Adrenal gland (tissue), 19 donors: ENCODE measurements at regions of chr10 and their contacts with region 1.

Region 1: DNA sequence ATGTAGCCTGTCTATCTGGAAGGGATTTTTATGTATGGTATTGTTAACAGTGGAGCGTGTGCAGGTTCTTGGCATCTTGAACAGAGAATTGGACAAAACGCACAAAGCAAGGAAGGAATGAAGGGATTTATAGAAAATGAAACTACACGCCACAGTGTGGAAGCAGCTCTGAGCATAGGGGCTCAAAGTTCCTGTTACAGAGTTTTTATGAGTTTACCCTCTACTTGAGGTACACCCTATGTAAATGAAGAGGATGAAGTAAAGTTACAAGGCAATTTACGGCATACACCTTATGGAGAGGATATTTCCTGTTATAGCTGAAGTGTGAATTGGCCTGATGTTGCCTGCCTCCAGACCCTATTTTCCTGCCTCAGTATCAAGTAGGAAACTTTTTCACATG is 33.3 kb downstream of the FANK1 start:
- DNase-seq: no peak
- H3K4me3 ChIP-seq: no peak overlapping the region
- H3K27ac ChIP-seq: no peak overlapping the region
- H3K4me1 ChIP-seq: peaks cover 0 to 6% of the 10 kb centered on the region in 2 donors
- H3K27me3 ChIP-seq: no peaks in the 10 kb centered on the region
- CTCF ChIP-seq: no peak
- POLR2A ChIP-seq: no peak

Region 2: DNA sequence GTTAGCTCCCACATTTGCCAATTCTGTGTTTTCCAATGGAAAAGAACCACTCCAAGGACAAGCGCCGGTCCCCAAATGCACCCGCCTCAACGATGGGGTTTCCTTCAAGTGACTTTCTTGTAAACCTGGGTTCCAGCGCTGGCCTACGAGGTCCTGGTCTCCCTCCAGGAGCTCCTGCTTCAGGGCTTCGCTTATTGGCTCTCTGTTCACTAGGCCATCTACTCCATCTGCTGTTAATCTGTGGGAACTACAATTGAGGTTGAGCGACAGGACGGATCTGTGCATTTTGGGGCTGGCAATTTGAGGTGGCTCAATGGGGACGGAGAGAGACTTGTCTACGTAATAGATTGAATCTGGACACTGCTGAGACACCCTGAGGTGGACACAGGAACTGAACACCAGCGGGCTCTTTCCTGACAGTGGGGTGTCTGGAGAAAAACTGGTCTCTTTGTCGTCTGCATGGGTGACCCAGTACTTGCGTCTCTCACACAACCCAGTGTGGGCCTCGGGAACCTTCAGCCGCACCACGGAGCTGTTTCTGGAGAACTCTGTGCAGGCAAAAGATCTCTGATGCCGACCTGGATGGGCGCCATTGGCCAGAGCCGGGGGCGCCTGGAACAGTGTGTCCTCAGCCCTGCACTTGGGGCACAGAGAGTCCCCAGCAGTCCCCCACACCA is 574.6 kb after region 1 on chr10:
- intact Hi-C with region 1: loop called in 1 of 2 experiments (anchors 5 kb)
- DNase-seq: peak; percentile 31 to 72 (median 46)
- H3K4me3 ChIP-seq: no peak overlapping the region
- H3K27ac ChIP-seq: no peak overlapping the region
- H3K4me1 ChIP-seq: no peaks in the 10 kb centered on the region
- H3K27me3 ChIP-seq: peaks cover 3% of the 10 kb centered on the region
- CTCF ChIP-seq: peak; percentile 50 to 86 (median 72)
- POLR2A ChIP-seq: no peak